ENCODE measurements at regions of chr5 and their contacts with region 1.

Region 1: GRCh38 chr5:53438486-53439472 is 41.6 kb upstream of the FST start:
- DNase-seq: no peak
- H3K4me3 ChIP-seq: no peak overlapping the region
- H3K27ac ChIP-seq: no peak overlapping the region
- H3K4me1 ChIP-seq: no peaks in the 10 kb centered on the region
- H3K27me3 ChIP-seq: no peaks in the 10 kb centered on the region
- CTCF ChIP-seq: no peak
- EP300 ChIP-seq: no peak
- POLR2A ChIP-seq: no peak
- RAD21 ChIP-seq: no peak

Region 2: DNA sequence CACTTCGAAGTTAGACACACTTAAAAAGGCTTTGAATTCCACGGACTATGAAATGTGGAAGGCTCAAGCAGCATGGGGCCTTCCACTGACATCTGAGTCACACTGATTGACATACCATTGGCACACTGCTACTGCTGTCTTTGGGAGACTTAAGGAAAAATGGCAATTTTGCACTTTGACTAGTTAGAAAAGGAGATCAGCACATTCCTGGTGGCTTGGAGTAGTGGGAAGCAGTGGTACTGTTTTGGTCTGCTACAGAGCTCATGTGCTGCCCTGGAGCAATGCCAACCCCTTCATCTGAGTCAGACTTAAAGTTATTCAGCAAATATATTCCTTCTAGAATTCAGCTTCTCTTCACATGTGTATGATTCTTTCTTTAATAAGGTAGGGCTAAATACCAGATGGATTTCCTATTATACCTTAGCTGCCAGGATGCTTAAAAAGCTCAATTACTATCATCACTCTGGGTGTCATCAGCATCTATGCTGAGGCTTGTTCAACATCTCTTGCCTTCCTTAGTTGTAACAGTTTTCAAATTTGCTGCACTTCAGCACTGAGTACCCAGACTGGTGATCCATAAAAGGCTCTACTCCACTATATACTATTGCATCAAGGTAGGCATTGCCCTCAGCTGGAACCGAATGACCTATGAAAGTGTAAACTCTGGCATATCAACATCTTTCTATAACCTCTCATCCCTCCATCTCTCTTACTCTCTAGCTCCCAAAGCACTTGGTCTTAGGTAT is 286.9 kb before region 1 on chr5:
- CTCF ChIA-PET with region 1: no interaction called
- POLR2A ChIA-PET with region 1: no interaction called
- DNase-seq: no peak
- H3K4me3 ChIP-seq: no peak overlapping the region
- H3K27ac ChIP-seq: no peak overlapping the region
- H3K4me1 ChIP-seq: no peaks in the 10 kb centered on the region
- H3K27me3 ChIP-seq: no peaks in the 10 kb centered on the region
- CTCF ChIP-seq: no peak
- EP300 ChIP-seq: no peak
- POLR2A ChIP-seq: no peak
- RAD21 ChIP-seq: no peak

Region 3: DNA sequence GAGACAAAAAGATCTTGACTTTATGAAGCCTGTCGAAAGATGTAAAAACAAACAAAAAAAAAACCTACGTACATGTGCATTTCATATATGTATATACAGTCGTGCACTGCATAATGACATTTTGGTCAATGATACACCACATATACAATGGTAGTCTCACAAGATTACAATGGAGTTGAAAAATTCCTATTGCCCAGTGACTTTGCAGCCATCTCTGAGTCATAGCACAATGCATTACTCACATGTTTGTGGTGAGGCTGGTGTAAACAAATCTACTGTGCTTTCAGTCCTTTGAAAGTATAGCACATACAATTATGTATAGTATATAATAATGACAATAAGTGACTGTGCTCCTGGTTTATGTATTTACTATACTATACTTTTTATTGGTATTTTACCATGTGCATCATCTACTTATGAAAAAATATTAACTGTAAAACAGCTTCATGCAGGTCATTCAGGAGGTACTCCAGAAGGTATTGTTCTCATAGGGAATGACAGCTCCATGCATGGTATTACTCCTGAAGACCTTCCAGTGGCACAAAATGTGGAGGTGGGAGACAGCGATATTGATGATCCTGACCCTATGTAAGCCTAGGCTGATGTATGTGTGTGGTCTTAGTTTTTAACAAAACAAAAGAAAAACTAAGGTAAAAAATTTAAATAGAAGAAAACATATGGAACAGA is 32.0 kb before region 1 on chr5:
- CTCF ChIA-PET with region 1: no interaction called
- POLR2A ChIA-PET with region 1: no interaction called
- DNase-seq: no peak
- H3K4me3 ChIP-seq: no peak overlapping the region
- H3K27ac ChIP-seq: no peak overlapping the region
- H3K4me1 ChIP-seq: no peaks in the 10 kb centered on the region
- H3K27me3 ChIP-seq: no peaks in the 10 kb centered on the region
- CTCF ChIP-seq: no peak
- EP300 ChIP-seq: no peak
- POLR2A ChIP-seq: no peak
- RAD21 ChIP-seq: no peak

Region 4: DNA sequence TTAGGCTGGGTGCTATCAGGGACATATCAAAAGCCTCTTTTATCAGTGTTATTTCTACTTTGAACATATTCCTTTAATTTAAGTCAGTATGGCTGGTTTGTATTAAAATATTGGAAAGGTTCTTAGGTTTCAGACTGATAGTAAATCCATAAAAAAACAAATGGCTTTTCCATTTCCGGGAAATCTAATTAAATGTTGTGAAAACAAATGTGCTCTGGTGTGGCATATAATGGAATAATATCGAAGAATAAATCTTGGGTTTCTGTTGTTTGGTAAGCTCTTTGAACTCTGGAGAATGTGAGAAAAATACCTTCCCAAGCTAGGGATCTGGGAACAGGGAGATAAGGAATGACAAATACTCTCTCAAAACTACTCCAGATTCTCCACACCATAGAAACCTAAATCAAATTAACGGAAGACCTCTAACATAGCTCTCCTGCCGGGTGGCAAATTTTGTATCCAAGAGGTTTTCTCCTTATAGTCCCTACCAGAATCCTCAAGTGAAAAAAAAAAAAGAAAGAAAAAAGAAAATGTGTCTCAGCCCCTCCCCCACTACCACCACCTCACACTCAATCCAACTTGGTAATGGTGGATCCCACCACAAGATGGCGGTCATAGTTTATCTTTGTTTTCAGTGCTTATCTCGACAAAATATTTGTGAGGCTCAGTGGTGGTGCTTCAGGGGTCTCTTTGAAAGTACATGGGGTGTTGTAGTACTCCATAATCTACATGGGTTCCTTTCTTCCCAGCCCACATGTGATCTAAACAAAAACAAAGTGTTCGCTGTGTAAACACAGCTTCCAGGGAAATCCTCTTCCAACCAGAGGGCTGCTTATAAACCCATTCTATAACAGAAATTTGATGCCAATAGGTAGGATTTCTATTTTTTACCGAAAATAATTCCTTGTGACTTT is 12.9 kb before region 1 on chr5:
- CTCF ChIA-PET with region 1: interaction called, 13 read pairs
- POLR2A ChIA-PET with region 1: interaction called, 3 read pairs
- DNase-seq: peak; percentile 10 to 82
- H3K4me3 ChIP-seq: no peak overlapping the region
- H3K27ac ChIP-seq: no peak overlapping the region
- H3K4me1 ChIP-seq: peaks cover 0 to 3% (median 0%) of the 10 kb centered on the region in 4 experiments; a peak in 1 of 7 replicates
- H3K27me3 ChIP-seq: no peaks in the 10 kb centered on the region
- CTCF ChIP-seq: peak; percentile 53 to 67 (median 66)
- EP300 ChIP-seq: no peak
- POLR2A ChIP-seq: no peak
- RAD21 ChIP-seq: peak; percentile 87 to 88

Region 5: DNA sequence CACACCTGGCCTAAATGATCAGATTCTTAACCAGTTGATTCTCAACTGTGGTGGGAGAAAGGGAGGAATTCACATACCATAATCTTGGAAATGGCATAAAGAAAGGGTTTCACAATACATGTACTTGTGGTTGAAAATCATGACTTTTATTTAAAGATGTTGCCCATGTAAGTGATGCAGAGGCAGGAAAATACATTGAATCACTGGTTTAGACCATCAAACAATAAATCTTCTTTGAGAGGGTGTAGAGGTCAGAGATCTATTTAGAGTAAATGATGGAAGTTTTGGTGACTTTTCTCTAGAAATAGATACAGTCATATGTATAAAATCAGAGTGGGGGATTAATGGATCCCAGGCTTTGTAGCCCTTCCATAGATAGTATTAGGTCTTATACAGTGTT is 137.1 kb after region 1 on chr5:
- CTCF ChIA-PET with region 1: no interaction called
- POLR2A ChIA-PET with region 1: no interaction called
- DNase-seq: no peak
- H3K4me3 ChIP-seq: no peak overlapping the region
- H3K27ac ChIP-seq: no peak overlapping the region
- H3K4me1 ChIP-seq: peaks cover 0 to 6% (median 0%) of the 10 kb centered on the region in 4 experiments; a peak in 2 of 7 replicates
- H3K27me3 ChIP-seq: no peaks in the 10 kb centered on the region
- CTCF ChIP-seq: no peak
- EP300 ChIP-seq: no peak
- POLR2A ChIP-seq: no peak
- RAD21 ChIP-seq: no peak

Region 6: GRCh38 chr5:54234304-54234933 is 795.6 kb after region 1 on chr5:
- CTCF ChIA-PET with region 1: interaction called, 10 read pairs
- POLR2A ChIA-PET with region 1: no interaction called
- DNase-seq: no peak
- H3K4me3 ChIP-seq: no peak overlapping the region
- H3K27ac ChIP-seq: no peak overlapping the region
- H3K4me1 ChIP-seq: no peaks in the 10 kb centered on the region
- H3K27me3 ChIP-seq: no peaks in the 10 kb centered on the region
- CTCF ChIP-seq: peak in 2 of 3 experiments; percentile 16 to 39; a peak in 2 of 4 replicates
- EP300 ChIP-seq: no peak
- POLR2A ChIP-seq: no peak
- RAD21 ChIP-seq: peak; percentile 42 to 43